HEK293 (cell line): ENCODE measurements at regions of chr9 and their contacts with region 1.

Region 1: GRCh38 chr9:132169672-132170392 is 8.0 kb downstream of the NTNG2 start:
- H3K4me3 ChIP-seq: no peak overlapping the region
- H3K27ac ChIP-seq: no peak overlapping the region
- H3K4me1 ChIP-seq: no peaks in the 10 kb centered on the region
- CTCF ChIP-seq: peak; percentile 93

Region 2: GRCh38 chr9:131762356-131762932 is 407.4 kb before region 1 on chr9:
- CTCF ChIA-PET with region 1: interaction called, 14 read pairs
- POLR2A ChIA-PET with region 1: no interaction called
- H3K4me3 ChIP-seq: no peak overlapping the region
- H3K27ac ChIP-seq: no peak overlapping the region
- H3K4me1 ChIP-seq: no peaks in the 10 kb centered on the region
- CTCF ChIP-seq: peak; percentile 99

Region 3: GRCh38 chr9:132032238-132032950 is 137.4 kb before region 1 on chr9:
- CTCF ChIA-PET with region 1: no interaction called
- POLR2A ChIA-PET with region 1: no interaction called
- H3K4me3 ChIP-seq: no peak overlapping the region
- H3K27ac ChIP-seq: no peak overlapping the region
- H3K4me1 ChIP-seq: peaks cover 7% of the 10 kb centered on the region; the same call in 1 of the 2 replicates
- CTCF ChIP-seq: no peak

Region 4: GRCh38 chr9:132182314-132183091 is 12.7 kb after region 1 on chr9:
- CTCF ChIA-PET with region 1: interaction called, 27 read pairs
- POLR2A ChIA-PET with region 1: no interaction called
- H3K4me3 ChIP-seq: no peak overlapping the region
- H3K27ac ChIP-seq: no peak overlapping the region
- H3K4me1 ChIP-seq: no peaks in the 10 kb centered on the region
- CTCF ChIP-seq: peak; percentile 55; the same call in 1 of the 2 replicates

Region 5: GRCh38 chr9:132214027-132214622 is 44.3 kb after region 1 on chr9:
- CTCF ChIA-PET with region 1: interaction called, 13 read pairs
- POLR2A ChIA-PET with region 1: no interaction called
- H3K4me3 ChIP-seq: peak overlapping the region; percentile 29
- H3K27ac ChIP-seq: no peak overlapping the region
- H3K4me1 ChIP-seq: peaks cover 6% of the 10 kb centered on the region; the same call in 1 of the 2 replicates
- CTCF ChIP-seq: no peak

Region 6: GRCh38 chr9:132231019-132231701 is 61.3 kb after region 1 on chr9:
- CTCF ChIA-PET with region 1: interaction called, 382 read pairs
- POLR2A ChIA-PET with region 1: interaction called, 14 read pairs
- H3K4me3 ChIP-seq: no peak overlapping the region
- H3K27ac ChIP-seq: no peak overlapping the region
- H3K4me1 ChIP-seq: no peaks in the 10 kb centered on the region
- CTCF ChIP-seq: no peak

Region 7: DNA sequence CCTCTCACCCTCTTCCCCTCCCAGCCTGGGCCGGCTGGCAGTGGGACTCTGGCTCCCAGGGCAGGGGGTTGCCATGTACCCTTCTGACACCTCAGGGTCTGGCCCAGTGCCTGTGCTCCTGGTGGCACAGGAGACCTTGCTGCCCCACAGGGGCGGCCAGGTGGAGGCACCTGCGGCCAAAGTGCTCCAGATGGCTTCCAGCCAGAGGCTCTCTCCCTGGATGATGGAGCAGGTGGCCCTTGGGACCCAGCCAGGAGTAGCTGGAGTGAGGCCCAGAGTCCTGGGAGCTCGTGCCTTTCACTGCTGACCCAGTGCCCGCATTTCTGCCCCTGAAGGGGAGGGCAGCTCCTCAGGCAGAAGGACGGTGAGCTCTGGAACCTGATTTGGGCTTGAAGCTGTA is 79.3 kb after region 1 on chr9:
- CTCF ChIA-PET with region 1: interaction called, 52 read pairs
- POLR2A ChIA-PET with region 1: no interaction called
- H3K4me3 ChIP-seq: no peak overlapping the region
- H3K27ac ChIP-seq: no peak overlapping the region
- H3K4me1 ChIP-seq: no peaks in the 10 kb centered on the region; the same call in 1 of the 2 replicates
- CTCF ChIP-seq: no peak